B cell (primary cell): ENCODE measurements at regions of chr1 and their contacts with region 1.

Region 1: DNA sequence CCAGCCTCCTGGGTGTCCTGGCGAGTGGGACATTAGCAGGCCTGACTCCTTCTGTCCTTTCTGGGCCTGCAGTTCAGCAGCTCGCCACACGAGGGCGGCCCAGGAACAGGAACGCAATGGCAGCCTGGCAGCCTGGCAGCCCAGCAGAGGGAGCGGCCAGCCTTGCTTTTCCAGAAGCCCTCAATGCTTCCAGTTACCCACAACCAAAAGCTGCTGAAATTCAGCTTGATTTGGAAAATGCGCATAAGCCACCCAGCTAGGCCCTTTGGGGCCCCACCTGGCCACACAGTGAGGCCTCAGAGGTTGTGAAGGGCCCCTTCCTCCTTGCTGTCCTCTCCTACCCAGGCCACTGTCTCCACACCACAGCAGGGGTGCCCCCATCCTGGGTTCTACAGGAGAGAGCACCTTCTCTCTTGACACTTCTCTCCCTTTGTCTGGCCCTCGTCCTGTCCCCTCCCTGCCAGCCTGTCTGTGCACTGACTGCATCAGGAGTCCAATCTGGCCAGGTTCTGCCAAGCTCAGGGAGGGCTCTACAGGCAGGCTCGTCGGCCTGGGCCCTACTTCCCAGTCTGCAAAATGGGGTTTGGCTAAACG is 103.4 kb upstream of the VAMP3 start:
- DNase-seq: peak; percentile 82
- ATAC-seq: peak; percentile 86
- H3K4me3 ChIP-seq: no peak overlapping the region
- H3K4me3 Mint-ChIP-seq: no peak overlapping the region
- H3K27ac ChIP-seq: no peak overlapping the region
- H3K27ac Mint-ChIP-seq: no peak overlapping the region
- H3K4me1 ChIP-seq: peaks cover 4 to 12% of the 10 kb centered on the region in 2 donors
- H3K4me1 Mint-ChIP-seq: peaks cover 10% of the 10 kb centered on the region
- H3K27me3 ChIP-seq: peaks cover 0 to 7% (median 2%) of the 10 kb centered on the region in 4 experiments
- H3K27me3 Mint-ChIP-seq: peaks cover 6% of the 10 kb centered on the region
- CTCF ChIP-seq: peak; percentile 99

Region 2: DNA sequence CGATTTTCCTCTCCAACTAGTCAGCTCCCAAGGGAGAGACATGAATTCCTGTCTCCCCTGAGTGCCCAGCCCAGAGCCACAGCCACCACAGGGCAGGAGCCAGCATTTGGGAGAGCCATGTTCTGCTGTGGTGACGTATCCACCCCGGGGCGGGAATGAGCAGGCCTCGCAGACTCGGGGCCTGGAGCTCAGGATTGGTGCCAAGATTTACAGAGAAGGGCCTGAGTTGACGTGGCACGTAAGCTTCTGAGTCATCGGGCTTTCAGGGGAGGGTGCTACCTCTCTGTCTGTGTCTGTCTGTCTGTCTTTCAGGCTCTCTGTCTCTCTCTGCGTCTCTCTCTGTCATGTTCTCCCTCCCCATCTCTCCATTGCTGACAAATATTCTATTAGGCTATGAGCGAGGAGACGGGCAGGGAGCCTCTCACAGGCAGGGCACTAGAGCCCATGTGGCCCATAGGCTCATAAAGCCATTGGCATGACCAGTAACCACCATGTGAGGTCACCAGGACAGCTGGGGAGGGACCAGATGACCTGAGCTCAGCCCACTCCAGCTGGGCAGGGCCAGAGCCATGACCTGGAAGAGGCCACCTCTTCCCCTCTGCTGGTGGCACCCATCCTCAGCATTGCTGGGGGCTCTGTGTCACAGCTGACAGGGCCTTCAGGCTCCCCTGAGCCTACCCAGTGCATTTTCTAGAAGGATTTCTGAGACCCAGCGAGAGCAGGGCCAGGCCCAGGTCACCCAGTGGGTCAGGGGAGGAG is 196.7 kb before region 1 on chr1:
- CTCF ChIA-PET with region 1: no interaction called
- POLR2A ChIA-PET with region 1: no interaction called
- intact Hi-C with region 1: no loop called
- DNase-seq: no peak
- ATAC-seq: no peak
- H3K4me3 ChIP-seq: no peak overlapping the region
- H3K4me3 Mint-ChIP-seq: no peak overlapping the region
- H3K27ac ChIP-seq: no peak overlapping the region
- H3K27ac Mint-ChIP-seq: no peak overlapping the region
- H3K4me1 ChIP-seq: no peaks in the 10 kb centered on the region
- H3K4me1 Mint-ChIP-seq: no peaks in the 10 kb centered on the region
- H3K27me3 ChIP-seq: no peaks in the 10 kb centered on the region
- H3K27me3 Mint-ChIP-seq: peaks cover 3% of the 10 kb centered on the region
- CTCF ChIP-seq: no peak

Region 3: DNA sequence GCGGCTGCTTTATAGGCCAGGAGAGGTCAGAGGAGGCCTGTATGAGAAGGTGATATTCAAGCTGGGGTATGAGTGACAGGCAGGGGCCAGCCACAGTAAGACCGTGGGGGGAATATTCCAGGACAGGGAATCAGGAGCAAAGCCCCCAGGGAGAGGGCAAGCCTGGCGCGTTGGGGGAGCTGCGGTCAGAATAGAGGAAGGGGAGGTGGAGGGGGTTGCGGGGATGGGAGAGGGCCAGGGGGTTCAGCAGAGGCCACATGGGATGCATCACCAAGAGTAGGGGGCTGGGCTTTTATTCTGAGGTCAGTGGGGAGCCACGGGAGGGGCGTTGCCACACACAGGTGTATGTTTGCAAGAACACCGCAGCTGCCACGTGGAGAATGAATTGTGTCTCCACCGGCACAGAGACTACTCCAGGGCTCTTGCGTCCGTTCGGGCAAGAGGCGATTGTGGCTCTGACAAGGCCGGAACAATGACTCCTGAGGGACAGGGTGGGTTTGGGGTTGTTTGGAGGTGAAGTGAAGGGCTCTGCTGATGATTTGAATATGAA is 18.7 kb after region 1 on chr1:
- CTCF ChIA-PET with region 1: interaction called, 16 read pairs
- POLR2A ChIA-PET with region 1: no interaction called
- intact Hi-C with region 1: no loop called
- DNase-seq: no peak
- ATAC-seq: no peak
- H3K4me3 ChIP-seq: no peak overlapping the region
- H3K4me3 Mint-ChIP-seq: no peak overlapping the region
- H3K27ac ChIP-seq: no peak overlapping the region
- H3K27ac Mint-ChIP-seq: no peak overlapping the region
- H3K4me1 ChIP-seq: no peaks in the 10 kb centered on the region
- H3K4me1 Mint-ChIP-seq: no peaks in the 10 kb centered on the region
- H3K27me3 ChIP-seq: peaks cover 0 to 2% (median 0%) of the 10 kb centered on the region in 4 experiments
- H3K27me3 Mint-ChIP-seq: peaks cover 25% of the 10 kb centered on the region
- CTCF ChIP-seq: no peak

Region 4: GRCh38 chr1:7704214-7705047 is 36.7 kb after region 1 on chr1:
- CTCF ChIA-PET with region 1: interaction called, 13 read pairs
- POLR2A ChIA-PET with region 1: no interaction called
- intact Hi-C with region 1: no loop called
- DNase-seq: peak; percentile 95
- ATAC-seq: peak; percentile 98
- H3K4me3 ChIP-seq: peak overlapping the region in 4 of 5 experiments; percentile 49 to 67 (median 62)
- H3K4me3 Mint-ChIP-seq: peak overlapping the region; percentile 88
- H3K27ac ChIP-seq: no peak overlapping the region
- H3K27ac Mint-ChIP-seq: peak overlapping the region; percentile 88
- H3K4me1 ChIP-seq: peaks cover 6 to 15% of the 10 kb centered on the region in 2 donors
- H3K4me1 Mint-ChIP-seq: peaks cover 14% of the 10 kb centered on the region
- H3K27me3 ChIP-seq: peaks cover 0 to 15% (median 7%) of the 10 kb centered on the region in 4 experiments
- H3K27me3 Mint-ChIP-seq: peaks cover 7% of the 10 kb centered on the region
- CTCF ChIP-seq: no peak

Region 5: DNA sequence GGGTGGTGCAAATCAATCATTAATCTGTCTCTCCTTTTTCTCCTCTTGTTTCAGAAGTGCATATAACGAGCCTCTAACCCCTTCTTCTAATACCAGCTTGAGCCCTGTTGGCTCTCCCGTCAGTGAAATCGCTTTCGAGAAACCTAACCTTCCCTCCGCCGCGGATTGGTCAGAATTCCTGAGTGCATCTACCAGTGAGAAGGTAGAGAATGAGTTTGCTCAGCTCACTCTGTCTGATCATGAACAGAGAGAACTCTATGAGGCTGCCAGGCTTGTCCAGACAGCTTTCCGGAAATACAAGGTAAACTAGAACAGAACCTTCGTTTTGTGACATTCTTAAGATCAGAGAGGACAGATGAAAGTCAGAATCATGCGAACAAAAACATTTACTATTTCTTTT is 78.1 kb after region 1 on chr1:
- CTCF ChIA-PET with region 1: interaction called, 504 read pairs
- POLR2A ChIA-PET with region 1: no interaction called
- intact Hi-C with region 1: no loop called
- DNase-seq: no peak
- ATAC-seq: no peak
- H3K4me3 ChIP-seq: no peak overlapping the region
- H3K4me3 Mint-ChIP-seq: no peak overlapping the region
- H3K27ac ChIP-seq: no peak overlapping the region
- H3K27ac Mint-ChIP-seq: no peak overlapping the region
- H3K4me1 ChIP-seq: no peaks in the 10 kb centered on the region
- H3K4me1 Mint-ChIP-seq: no peaks in the 10 kb centered on the region
- H3K27me3 ChIP-seq: no peaks in the 10 kb centered on the region
- H3K27me3 Mint-ChIP-seq: no peaks in the 10 kb centered on the region
- CTCF ChIP-seq: no peak

Region 6: DNA sequence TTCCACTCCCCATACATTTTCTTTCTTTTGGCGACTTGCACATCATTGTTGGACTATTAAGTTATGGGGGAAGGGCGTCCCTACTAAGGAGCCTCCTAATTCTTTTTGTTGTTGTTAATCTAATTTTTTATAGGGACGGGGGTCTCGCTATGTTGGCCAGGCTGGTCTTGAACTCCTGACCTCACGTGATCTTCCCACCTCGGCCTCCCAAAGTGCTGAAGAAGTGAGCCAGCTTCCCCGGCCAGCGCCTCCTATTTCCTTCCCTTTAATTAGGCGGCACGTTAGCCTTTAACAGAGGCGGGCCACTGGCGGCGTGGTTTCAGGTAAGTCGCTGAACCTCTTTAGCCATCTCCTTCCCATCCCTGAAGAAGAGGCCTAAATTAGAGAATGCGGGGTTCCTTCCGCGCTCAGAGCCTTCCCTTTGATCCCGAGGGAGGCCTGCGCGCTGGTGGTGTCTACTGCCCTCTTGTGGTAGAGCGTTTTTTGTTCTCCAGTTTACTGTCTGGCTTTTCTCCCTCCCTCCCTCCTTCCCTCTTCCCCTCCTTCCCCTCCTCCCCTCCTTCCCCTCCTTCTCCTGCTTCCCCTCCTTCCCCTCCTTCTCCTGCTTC is 234.9 kb after region 1 on chr1:
- CTCF ChIA-PET with region 1: interaction called, 44 read pairs
- POLR2A ChIA-PET with region 1: no interaction called
- intact Hi-C with region 1: loop called (anchors 1 kb)
- DNase-seq: peak; percentile 77
- ATAC-seq: peak; percentile 67
- H3K4me3 ChIP-seq: peak overlapping the region in 2 of 5 experiments; percentile 20 to 38
- H3K4me3 Mint-ChIP-seq: peak overlapping the region; percentile 59
- H3K27ac ChIP-seq: no peak overlapping the region
- H3K27ac Mint-ChIP-seq: no peak overlapping the region
- H3K4me1 ChIP-seq: peaks cover 3 to 6% of the 10 kb centered on the region in 2 donors
- H3K4me1 Mint-ChIP-seq: peaks cover 2% of the 10 kb centered on the region
- H3K27me3 ChIP-seq: peaks cover 0 to 9% (median 0%) of the 10 kb centered on the region in 4 experiments
- H3K27me3 Mint-ChIP-seq: no peaks in the 10 kb centered on the region
- CTCF ChIP-seq: peak; percentile 73

Region 7: GRCh38 chr1:7975212-7975865 is 307.6 kb after region 1 on chr1:
- CTCF ChIA-PET with region 1: no interaction called
- POLR2A ChIA-PET with region 1: no interaction called
- intact Hi-C with region 1: no loop called
- DNase-seq: peak; percentile 46
- ATAC-seq: peak; percentile 43
- H3K4me3 ChIP-seq: no peak overlapping the region
- H3K4me3 Mint-ChIP-seq: no peak overlapping the region
- H3K27ac ChIP-seq: no peak overlapping the region
- H3K27ac Mint-ChIP-seq: no peak overlapping the region
- H3K4me1 ChIP-seq: no peaks in the 10 kb centered on the region
- H3K4me1 Mint-ChIP-seq: no peaks in the 10 kb centered on the region
- H3K27me3 ChIP-seq: no peaks in the 10 kb centered on the region
- H3K27me3 Mint-ChIP-seq: no peaks in the 10 kb centered on the region
- CTCF ChIP-seq: peak; percentile 68